H1 (cell line): ENCODE measurements at regions of chr21 and their contacts with region 1.

Region 1: DNA sequence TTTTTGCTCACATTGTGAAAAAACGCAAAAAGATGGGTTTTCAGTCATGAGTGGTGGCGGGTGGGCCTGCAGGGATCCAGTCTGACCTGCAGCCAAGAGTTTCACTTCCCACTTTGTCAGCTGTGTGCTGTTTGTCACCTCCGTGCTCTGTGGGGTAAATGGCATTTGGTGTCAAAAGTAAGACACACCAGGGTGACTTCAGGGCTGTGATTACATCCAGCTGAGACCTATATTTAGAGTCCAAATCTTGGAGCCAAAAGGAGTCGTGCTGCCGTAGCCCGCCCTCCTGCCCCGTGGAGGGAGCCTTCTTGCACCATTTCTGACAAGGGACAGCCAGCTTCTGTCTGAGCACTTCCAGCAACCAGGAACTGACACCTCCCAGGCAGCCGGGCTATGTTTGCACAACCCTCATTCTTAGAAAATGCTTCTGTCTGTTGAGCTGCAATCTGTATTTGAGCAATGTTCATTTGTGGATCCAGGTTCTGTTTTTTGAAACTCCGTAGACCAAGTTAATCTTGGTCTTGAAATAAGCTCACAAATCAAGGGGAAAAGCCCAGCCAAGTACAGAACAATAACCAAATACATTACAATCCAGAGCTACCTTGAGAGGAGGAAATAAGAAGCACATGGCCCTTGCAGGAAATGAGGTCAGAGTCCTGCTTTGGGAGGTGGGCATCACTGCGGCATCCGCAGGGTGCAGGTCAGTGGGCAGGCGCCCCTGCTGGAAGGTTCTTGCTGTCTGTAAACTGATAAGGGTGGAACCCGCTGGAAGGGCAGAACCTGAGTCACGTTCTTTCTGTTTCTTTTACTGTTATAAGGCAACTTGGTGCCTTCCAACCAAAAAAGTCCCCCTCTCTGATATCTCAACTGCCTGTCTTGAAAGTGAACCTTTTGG is 14.4 kb downstream of the ABCG1 start:
- DNase-seq: no peak
- H3K4me3 ChIP-seq: no peak overlapping the region
- H3K27ac ChIP-seq: no peak overlapping the region
- H3K4me1 ChIP-seq: peaks cover 7 to 21% (median 13%) of the 10 kb centered on the region in 4 experiments
- H3K27me3 ChIP-seq: peaks cover 0 to 24% (median 20%) of the 10 kb centered on the region in 4 experiments; a peak in 6 of 7 replicates
- CTCF ChIP-seq: peak in 2 of 3 experiments; percentile 32 to 48; a peak in 3 of 4 replicates
- EP300 ChIP-seq: no peak
- POLR2A ChIP-seq: no peak
- RAD21 ChIP-seq: peak in 1 of 2 experiments; percentile 11; a peak in 1 of 4 replicates

Region 2: GRCh38 chr21:42220138-42220701 is 13.1 kb before region 1 on chr21:
- CTCF ChIA-PET with region 1: interaction called, 12 read pairs
- POLR2A ChIA-PET with region 1: interaction called, 18 read pairs
- DNase-seq: peak in 1 of 2 experiments; percentile 76
- H3K4me3 ChIP-seq: peak overlapping the region; percentile 59 to 89 (median 67)
- H3K27ac ChIP-seq: no peak overlapping the region
- H3K4me1 ChIP-seq: peaks cover 0 to 4% (median 2%) of the 10 kb centered on the region in 4 experiments; a peak in 4 of 7 replicates
- H3K27me3 ChIP-seq: peaks cover 8 to 40% (median 23%) of the 10 kb centered on the region in 4 experiments
- CTCF ChIP-seq: no peak
- EP300 ChIP-seq: no peak
- POLR2A ChIP-seq: no peak
- RAD21 ChIP-seq: no peak